K562 (cell line): ENCODE measurements at regions of chr12 and their contacts with region 1.

Region 1: DNA sequence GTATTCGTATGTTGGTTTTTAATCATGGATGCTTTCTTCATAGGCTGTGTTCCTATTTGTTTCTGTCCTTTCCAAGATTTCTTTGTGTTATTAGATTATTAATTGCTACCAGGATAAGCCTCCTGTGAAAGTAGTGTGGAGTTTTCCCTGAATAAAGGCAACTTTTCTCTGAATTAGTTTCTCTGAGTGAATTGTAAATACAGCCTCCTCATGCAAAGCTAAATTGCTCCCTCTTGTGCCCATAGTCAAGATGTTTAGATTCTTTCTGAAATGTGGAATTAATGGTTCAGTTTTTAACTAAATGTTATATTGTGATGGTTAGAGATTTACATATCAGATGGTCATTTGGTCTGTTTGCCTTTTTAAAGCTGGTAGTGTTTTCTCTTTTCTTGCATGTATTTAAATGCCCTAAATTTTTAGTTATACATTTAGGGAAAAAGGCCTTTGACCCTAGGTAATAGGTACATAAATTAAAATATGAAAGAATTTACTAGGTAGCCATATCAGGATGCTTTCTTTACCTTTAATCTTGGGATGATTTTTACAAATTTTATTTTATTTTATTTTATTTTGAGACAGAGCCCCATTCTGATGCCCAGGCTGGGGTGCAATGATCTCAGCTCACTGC is 8.9 kb downstream of the APAF1 start:
- DNase-seq: peak; percentile 23 to 69 (median 29)
- ATAC-seq: peak; percentile 61
- H3K4me3 ChIP-seq: no peak overlapping the region
- H3K27ac ChIP-seq: no peak overlapping the region
- H3K4me1 ChIP-seq: peaks cover 0 to 12% of the 10 kb centered on the region in 2 experiments; a peak in 2 of 5 replicates
- H3K27me3 ChIP-seq: no peaks in the 10 kb centered on the region
- CTCF ChIP-seq: peak; percentile 42 to 79 (median 59); a peak in 5 of 6 replicates
- EP300 ChIP-seq: no peak
- POLR2A ChIP-seq: no peak
- RAD21 ChIP-seq: peak; percentile 69 to 84

Region 2: DNA sequence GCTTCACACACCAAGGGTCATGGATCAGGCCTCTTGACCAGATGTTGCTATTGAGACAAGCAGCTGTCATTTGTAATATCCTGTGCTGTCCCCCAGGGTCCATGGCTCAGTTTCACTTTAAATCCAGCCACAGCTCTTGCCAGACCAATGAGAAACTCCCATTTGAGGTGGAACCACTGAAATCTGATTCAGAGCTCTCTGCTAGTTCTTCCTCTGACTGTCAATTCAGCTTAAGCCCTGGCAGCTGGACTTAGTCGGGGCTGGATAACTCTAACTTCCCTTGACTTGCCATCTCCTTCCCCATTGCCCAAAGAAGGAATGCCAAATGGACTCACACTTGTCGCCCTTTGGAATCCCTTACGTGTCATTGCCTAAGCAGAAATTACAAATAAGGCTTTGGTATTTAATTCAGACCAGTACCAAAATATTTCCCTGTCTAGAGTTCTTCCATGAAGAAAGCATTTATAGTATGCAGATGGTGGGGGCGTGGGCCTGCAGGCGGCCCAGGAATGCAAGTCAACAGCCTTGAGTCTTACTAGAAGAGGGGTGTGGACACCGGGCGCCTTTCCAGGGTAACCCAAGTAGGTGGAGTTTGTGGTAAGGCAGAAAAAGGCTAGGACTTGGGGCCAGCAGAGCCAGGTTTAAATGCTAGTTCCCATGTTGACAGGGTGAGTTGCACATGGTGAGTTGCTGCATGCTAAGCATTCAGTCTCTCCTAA is 235.5 kb before region 1 on chr12:
- CTCF ChIA-PET with region 1: interaction called, 6 read pairs
- POLR2A ChIA-PET with region 1: no interaction called
- in situ Hi-C with region 1: no loop called
- intact Hi-C with region 1: loop called (anchors 2 kb)
- DNase-seq: peak; percentile 37 to 60 (median 45)
- ATAC-seq: peak; percentile 71
- H3K4me3 ChIP-seq: no peak overlapping the region
- H3K27ac ChIP-seq: no peak overlapping the region
- H3K4me1 ChIP-seq: peaks cover 0 to 5% of the 10 kb centered on the region in 2 experiments; a peak in 4 of 5 replicates
- H3K27me3 ChIP-seq: peaks cover 3 to 41% of the 10 kb centered on the region in 2 experiments; a peak in 4 of 5 replicates
- CTCF ChIP-seq: no peak
- EP300 ChIP-seq: no peak
- POLR2A ChIP-seq: no peak
- RAD21 ChIP-seq: no peak

Region 3: GRCh38 chr12:98424726-98425401 is 229.1 kb before region 1 on chr12:
- CTCF ChIA-PET with region 1: interaction called, 8 read pairs
- POLR2A ChIA-PET with region 1: no interaction called
- in situ Hi-C with region 1: no loop called
- intact Hi-C with region 1: loop called (anchors 2 kb)
- DNase-seq: peak; percentile 60 to 78 (median 74)
- ATAC-seq: peak; percentile 91
- H3K4me3 ChIP-seq: no peak overlapping the region
- H3K27ac ChIP-seq: no peak overlapping the region
- H3K4me1 ChIP-seq: peaks cover 3 to 7% of the 10 kb centered on the region in 2 experiments; a peak in 2 of 5 replicates
- H3K27me3 ChIP-seq: peaks cover 3 to 38% of the 10 kb centered on the region in 2 experiments; a peak in 4 of 5 replicates
- CTCF ChIP-seq: peak; percentile 73 to 83 (median 76)
- EP300 ChIP-seq: no peak
- POLR2A ChIP-seq: no peak
- RAD21 ChIP-seq: peak; percentile 71 to 79

Region 4: GRCh38 chr12:98572010-98572409 is 82.0 kb before region 1 on chr12:
- CTCF ChIA-PET with region 1: interaction called, 12 read pairs
- POLR2A ChIA-PET with region 1: no interaction called
- in situ Hi-C with region 1: no loop called
- intact Hi-C with region 1: loop called (anchors 1 kb)
- DNase-seq: peak in 3 of 4 experiments; percentile 40 to 54 (median 49)
- ATAC-seq: peak; percentile 89
- H3K4me3 ChIP-seq: no peak overlapping the region
- H3K27ac ChIP-seq: no peak overlapping the region
- H3K4me1 ChIP-seq: no peaks in the 10 kb centered on the region
- H3K27me3 ChIP-seq: no peaks in the 10 kb centered on the region
- CTCF ChIP-seq: peak; percentile 59 to 65 (median 60)
- EP300 ChIP-seq: no peak
- POLR2A ChIP-seq: no peak
- RAD21 ChIP-seq: peak in 1 of 2 experiments; percentile 37; a peak in 2 of 4 replicates

Region 5: DNA sequence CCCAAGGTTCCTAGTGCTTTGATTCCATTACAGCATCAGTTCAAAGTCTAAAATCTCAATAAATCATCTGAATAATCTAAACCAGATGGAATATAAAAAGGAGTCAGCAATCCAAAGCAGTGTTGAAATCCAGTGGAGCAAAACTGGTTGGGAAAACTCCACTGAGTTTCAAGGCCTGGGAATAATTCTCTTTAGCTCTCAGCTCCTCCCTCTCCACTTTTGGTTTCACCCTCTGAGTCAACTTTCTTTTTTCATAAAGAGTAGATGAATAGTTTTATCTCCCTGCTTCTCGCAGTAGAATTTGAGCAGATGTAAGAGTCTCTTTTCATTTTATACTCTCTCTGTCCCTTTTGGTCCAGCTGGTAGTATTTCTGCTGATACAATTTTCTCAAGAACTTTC is 329.7 kb after region 1 on chr12:
- CTCF ChIA-PET with region 1: no interaction called
- POLR2A ChIA-PET with region 1: no interaction called
- in situ Hi-C with region 1: no loop called
- intact Hi-C with region 1: no loop called
- DNase-seq: no peak
- ATAC-seq: no peak
- H3K4me3 ChIP-seq: no peak overlapping the region
- H3K27ac ChIP-seq: no peak overlapping the region
- H3K4me1 ChIP-seq: no peaks in the 10 kb centered on the region
- H3K27me3 ChIP-seq: no peaks in the 10 kb centered on the region
- CTCF ChIP-seq: no peak
- EP300 ChIP-seq: no peak
- POLR2A ChIP-seq: no peak
- RAD21 ChIP-seq: no peak